Endothelial cell of umbilical vein (primary cell): ENCODE measurements at regions of chr6 and their contacts with region 1.

Region 1: GRCh38 chr6:49198015-49198414 is 265.0 kb downstream of the MMUT start:
- DNase-seq: no peak
- H3K4me3 ChIP-seq: no peak overlapping the region
- H3K27ac ChIP-seq: no peak overlapping the region
- H3K4me1 ChIP-seq: no peaks in the 10 kb centered on the region
- H3K27me3 ChIP-seq: peaks cover 0 to 2% of the 10 kb centered on the region in 2 experiments
- CTCF ChIP-seq: no peak
- POLR2A ChIP-seq: no peak

Region 2: GRCh38 chr6:49423817-49424216 is 225.8 kb after region 1 on chr6:
- CTCF ChIA-PET with region 1: no interaction called
- POLR2A ChIA-PET with region 1: no interaction called
- dilution Hi-C with region 1: no loop called
- intact Hi-C with region 1: loop called (anchors 5 kb)
- DNase-seq: peak; percentile 14
- H3K4me3 ChIP-seq: no peak overlapping the region
- H3K27ac ChIP-seq: no peak overlapping the region
- H3K4me1 ChIP-seq: no peaks in the 10 kb centered on the region
- H3K27me3 ChIP-seq: no peaks in the 10 kb centered on the region
- CTCF ChIP-seq: no peak
- POLR2A ChIP-seq: no peak